Heart left ventricle (tissue), 16 donors: ENCODE measurements at regions of chr16 and their contacts with region 1.

Region 1: GRCh38 chr16:25089351-25089750 is 22.2 kb upstream of the LCMT1 start:
- DNase-seq: no peak
- ATAC-seq: no peak
- H3K4me3 ChIP-seq: no peak overlapping the region
- H3K27ac ChIP-seq: no peak overlapping the region
- H3K4me1 ChIP-seq: peaks cover 0 to 14% (median 0%) of the 10 kb centered on the region in 12 donors
- H3K27me3 ChIP-seq: no peaks in the 10 kb centered on the region
- CTCF ChIP-seq: no peak
- POLR2A ChIP-seq: no peak

Region 2: DNA sequence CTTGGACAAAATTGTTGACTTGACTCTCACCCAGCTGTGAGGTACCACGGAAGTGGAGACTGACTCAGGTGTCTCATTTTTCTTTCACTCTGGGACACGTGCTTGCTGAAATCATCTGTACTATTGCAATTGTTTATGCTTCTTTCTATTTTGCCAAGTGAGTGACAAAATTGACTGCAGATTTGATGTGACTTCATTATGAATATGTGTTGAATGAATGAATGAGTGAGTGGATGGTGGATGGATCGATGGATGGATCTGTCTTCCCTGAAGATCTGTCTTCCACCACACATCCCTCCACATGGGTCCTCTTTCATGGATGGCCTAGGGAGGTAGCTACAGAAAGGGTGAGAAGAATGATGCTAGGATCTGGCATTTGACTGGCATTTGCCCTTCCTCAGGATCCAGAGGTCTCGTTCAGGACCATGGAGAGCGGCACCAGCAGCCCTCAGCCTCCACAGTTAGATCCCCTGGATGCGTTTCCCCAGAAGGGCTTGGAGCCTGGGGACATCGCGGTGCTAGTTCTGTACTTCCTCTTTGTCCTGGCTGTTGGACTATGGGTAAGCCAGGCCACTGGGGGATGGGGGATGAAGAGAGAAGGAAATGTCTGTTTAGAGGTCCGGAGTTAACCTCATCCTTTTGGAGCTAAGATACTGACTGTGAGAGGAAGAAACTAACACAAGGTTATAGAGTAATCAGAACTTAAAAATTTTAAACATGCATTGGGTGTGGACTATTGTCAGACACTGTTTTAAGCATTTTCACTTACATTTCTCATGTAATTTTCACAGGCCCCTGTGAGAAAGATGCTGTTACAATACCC is 230.9 kb before region 1 on chr16:
- intact Hi-C with region 1: loop called in 1 of 10 experiments (anchors 10 kb)
- DNase-seq: peak; percentile 25 to 68 (median 46)
- ATAC-seq: peak in 3 of 4 donors; percentile 60 to 69 (median 64)
- H3K4me3 ChIP-seq: no peak overlapping the region
- H3K27ac ChIP-seq: no peak overlapping the region
- H3K4me1 ChIP-seq: peaks cover 0 to 10% (median 1%) of the 10 kb centered on the region in 12 donors
- H3K27me3 ChIP-seq: no peaks in the 10 kb centered on the region
- CTCF ChIP-seq: no peak
- POLR2A ChIP-seq: no peak

Region 3: DNA sequence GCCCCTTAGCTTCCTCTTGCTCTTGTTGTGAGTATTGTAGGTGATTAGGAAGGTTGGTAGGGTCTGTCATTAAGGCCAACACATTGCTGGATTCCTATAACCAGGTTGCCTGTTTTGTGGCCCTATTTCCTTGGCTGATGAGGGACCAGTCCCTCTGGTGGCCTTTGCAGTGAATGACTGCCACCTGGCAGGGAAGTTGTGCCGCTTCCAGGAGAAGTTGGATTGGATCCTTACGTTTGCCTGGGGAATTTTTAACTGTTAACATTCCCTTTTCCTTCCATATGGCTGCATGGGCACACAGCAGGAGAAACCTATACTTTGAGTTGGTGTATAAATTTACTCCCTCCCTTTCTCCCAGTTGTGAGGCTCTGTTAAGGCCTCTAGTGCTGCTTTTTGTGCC is 54.6 kb after region 1 on chr16:
- intact Hi-C with region 1: no loop called
- DNase-seq: no peak
- ATAC-seq: no peak
- H3K4me3 ChIP-seq: no peak overlapping the region
- H3K27ac ChIP-seq: no peak overlapping the region
- H3K4me1 ChIP-seq: peaks cover 0 to 5% (median 0%) of the 10 kb centered on the region in 12 donors
- H3K27me3 ChIP-seq: no peaks in the 10 kb centered on the region
- CTCF ChIP-seq: peak in 7 of 12 donors; percentile 8 to 39 (median 19)
- POLR2A ChIP-seq: no peak